CD8-positive, alpha-beta T cell (primary cell): ENCODE measurements at regions of chr1 and their contacts with region 1.

Region 1: GRCh38 chr1:26233903-26234643 is at the start of gene CEP85:
- DNase-seq: peak; percentile 96 to 99 (median 99)
- ATAC-seq: peak; percentile 90
- H3K4me3 ChIP-seq: peak within 1 kb of the TSS; percentile 87 to 95
- H3K4me3 Mint-ChIP-seq: peak within 1 kb of the TSS; percentile 99
- H3K27ac ChIP-seq: peak within 1 kb of the TSS; percentile 81 to 85
- H3K27ac Mint-ChIP-seq: peak within 1 kb of the TSS; percentile 95
- H3K4me1 ChIP-seq: peaks cover 17% of the 10 kb centered on the region
- H3K4me1 Mint-ChIP-seq: peaks cover 36% of the 10 kb centered on the region
- H3K27me3 ChIP-seq: no peaks in the 10 kb centered on the region
- H3K27me3 Mint-ChIP-seq: no peaks in the 10 kb centered on the region
- CTCF ChIP-seq: peak; percentile 72
- total RNA-seq, gene CEP85: 7.1 TPM

Region 2: DNA sequence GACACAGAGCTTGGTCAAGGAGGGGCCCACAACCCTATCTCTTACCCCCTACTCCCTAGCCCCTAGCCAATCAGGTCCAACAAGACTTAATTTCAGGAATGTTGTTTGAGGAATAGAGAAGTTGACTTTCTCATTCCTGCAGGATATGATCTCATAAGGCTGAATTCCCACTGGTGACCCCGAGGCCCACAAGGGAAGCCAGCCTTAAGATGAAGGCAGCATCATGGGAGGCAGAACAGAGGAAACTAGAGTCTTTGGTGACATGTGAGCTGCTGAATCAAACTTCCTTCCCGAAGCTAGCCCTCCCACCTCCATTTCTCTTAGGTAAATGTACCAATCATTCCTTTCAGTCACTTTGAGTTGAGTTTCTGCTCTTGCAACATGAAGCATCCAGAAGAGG is 131.5 kb before region 1 on chr1:
- CTCF ChIA-PET with region 1: interaction called, 4 read pairs
- POLR2A ChIA-PET with region 1: no interaction called
- intact Hi-C with region 1: loop called in 1 of 2 experiments (anchors 2 kb)
- DNase-seq: no peak
- ATAC-seq: no peak
- H3K4me3 ChIP-seq: no peak overlapping the region
- H3K4me3 Mint-ChIP-seq: no peak overlapping the region
- H3K27ac ChIP-seq: no peak overlapping the region
- H3K27ac Mint-ChIP-seq: no peak overlapping the region
- H3K4me1 ChIP-seq: no peaks in the 10 kb centered on the region
- H3K4me1 Mint-ChIP-seq: peaks cover 3% of the 10 kb centered on the region
- H3K27me3 ChIP-seq: peaks cover 0 to 3% of the 10 kb centered on the region in 2 experiments
- H3K27me3 Mint-ChIP-seq: peaks cover 3% of the 10 kb centered on the region
- CTCF ChIP-seq: no peak

Region 3: DNA sequence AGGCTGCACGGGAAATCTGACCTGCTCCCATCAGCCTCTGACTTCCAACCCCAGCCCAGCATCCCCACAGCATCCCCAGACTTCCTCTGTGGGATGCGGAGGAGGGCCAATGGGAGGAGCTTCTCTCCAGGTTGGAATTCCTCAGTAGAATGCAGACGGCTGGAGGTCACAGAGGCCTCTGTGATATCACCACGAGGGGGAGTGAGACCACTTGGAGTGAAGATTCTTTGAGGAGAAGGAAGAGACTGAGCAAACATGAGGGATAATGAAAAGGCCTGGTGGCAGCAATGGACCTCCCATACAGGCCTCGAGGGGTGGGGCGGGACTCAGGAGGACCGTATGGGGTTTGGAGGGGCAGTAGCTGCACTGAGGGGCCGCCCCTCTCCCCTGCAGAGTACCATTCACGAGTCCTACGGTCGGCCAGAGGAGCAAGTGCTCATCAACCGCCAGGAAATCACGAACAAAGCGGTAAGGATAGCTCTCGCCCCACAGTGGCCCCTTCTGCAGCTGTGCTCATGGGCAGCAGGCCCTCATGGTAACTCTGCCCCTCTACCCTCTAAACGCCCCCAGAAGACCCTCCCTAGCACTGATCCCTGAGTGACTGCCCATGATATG is 43.6 kb before region 1 on chr1 and contains the start of gene CATSPER4:
- CTCF ChIA-PET with region 1: interaction called, 9 read pairs
- POLR2A ChIA-PET with region 1: no interaction called
- intact Hi-C with region 1: loop called in 1 of 2 experiments (anchors 1 kb)
- DNase-seq: peak in 1 of 9 experiments; percentile 42
- ATAC-seq: no peak
- H3K4me3 ChIP-seq: no peak within 1 kb of the TSS
- H3K4me3 Mint-ChIP-seq: no peak within 1 kb of the TSS
- H3K27ac ChIP-seq: no peak within 1 kb of the TSS
- H3K27ac Mint-ChIP-seq: no peak within 1 kb of the TSS
- H3K4me1 ChIP-seq: no peaks in the 10 kb centered on the region
- H3K4me1 Mint-ChIP-seq: peaks cover 5% of the 10 kb centered on the region
- H3K27me3 ChIP-seq: no peaks in the 10 kb centered on the region
- H3K27me3 Mint-ChIP-seq: no peaks in the 10 kb centered on the region
- CTCF ChIP-seq: no peak
- total RNA-seq, gene CATSPER4: not detected

Region 4: DNA sequence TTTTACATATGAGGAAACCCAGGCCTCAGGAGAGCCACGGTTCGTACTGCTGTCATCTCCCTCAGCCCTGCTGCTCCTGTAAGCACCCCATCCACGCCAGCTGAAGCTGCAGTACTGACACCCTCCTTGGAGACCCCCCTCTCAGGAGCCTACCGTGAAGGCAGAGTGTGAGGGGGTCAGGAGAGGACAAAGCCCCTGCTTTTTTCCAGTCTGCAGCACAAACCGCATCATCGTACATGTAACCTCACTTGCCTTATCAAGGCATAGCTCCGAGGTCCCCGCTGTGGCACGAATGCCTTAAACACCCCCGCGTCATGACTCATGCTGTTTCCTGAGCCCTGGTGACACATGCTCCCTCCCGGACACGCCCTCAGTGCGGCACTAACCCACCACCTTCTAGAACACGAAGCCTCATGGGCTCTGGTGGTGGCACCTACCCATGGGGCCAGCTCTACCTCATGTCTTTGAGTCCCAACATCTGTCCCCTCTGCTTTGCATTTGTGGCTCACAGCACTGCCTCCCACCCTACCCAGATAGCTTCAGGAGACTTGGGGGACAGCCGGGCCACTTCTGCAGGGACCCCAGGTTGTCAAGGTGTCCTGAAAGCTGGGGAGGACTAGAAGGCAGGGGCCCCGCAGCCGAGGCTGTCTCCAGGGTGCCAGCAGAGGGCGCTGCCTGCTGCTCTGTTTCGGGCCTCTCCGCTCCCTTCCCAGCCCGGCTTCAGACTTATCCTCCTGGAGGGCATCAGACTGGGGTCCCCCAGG is 50.7 kb after region 1 on chr1:
- CTCF ChIA-PET with region 1: interaction called, 8 read pairs
- POLR2A ChIA-PET with region 1: interaction called, 6 read pairs
- intact Hi-C with region 1: loop called in 1 of 2 experiments (anchors 2 kb)
- DNase-seq: peak; percentile 82 to 98 (median 94)
- ATAC-seq: peak; percentile 72
- H3K4me3 ChIP-seq: peak overlapping the region; percentile 27 to 28
- H3K4me3 Mint-ChIP-seq: peak overlapping the region; percentile 82
- H3K27ac ChIP-seq: peak overlapping the region; percentile 61 to 76
- H3K27ac Mint-ChIP-seq: peak overlapping the region; percentile 100
- H3K4me1 ChIP-seq: peaks cover 93% of the 10 kb centered on the region
- H3K4me1 Mint-ChIP-seq: peaks cover 92% of the 10 kb centered on the region
- H3K27me3 ChIP-seq: no peaks in the 10 kb centered on the region
- H3K27me3 Mint-ChIP-seq: no peaks in the 10 kb centered on the region
- CTCF ChIP-seq: peak; percentile 46

Region 5: DNA sequence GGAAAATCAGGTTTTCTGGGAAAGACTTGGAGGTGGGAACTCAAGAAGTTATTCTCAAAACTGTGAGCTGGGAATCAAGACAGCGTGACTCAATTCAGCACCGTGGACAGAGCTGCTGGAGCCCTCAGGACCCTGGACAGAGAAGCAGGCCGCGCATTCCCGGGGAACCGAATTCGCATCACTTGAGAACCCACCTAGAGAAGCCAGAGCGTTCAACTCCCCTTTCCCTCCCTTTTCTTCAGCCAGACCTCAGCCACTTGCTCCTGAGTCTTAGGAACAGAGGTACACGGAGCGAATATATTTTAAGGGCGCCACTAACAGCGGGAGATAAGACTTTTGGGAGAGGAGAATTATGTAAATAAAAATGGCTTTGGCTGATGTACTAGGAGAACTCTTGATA is 174.5 kb after region 1 on chr1:
- CTCF ChIA-PET with region 1: no interaction called
- POLR2A ChIA-PET with region 1: no interaction called
- intact Hi-C with region 1: loop called in 1 of 2 experiments (anchors 1 kb)
- DNase-seq: peak; percentile 65 to 87 (median 81)
- ATAC-seq: peak; percentile 99
- H3K4me3 ChIP-seq: no peak overlapping the region
- H3K4me3 Mint-ChIP-seq: peak overlapping the region; percentile 62
- H3K27ac ChIP-seq: no peak overlapping the region
- H3K27ac Mint-ChIP-seq: no peak overlapping the region
- H3K4me1 ChIP-seq: peaks cover 17% of the 10 kb centered on the region
- H3K4me1 Mint-ChIP-seq: peaks cover 22% of the 10 kb centered on the region
- H3K27me3 ChIP-seq: peaks cover 26 to 42% of the 10 kb centered on the region in 2 experiments
- H3K27me3 Mint-ChIP-seq: peaks cover 54% of the 10 kb centered on the region
- CTCF ChIP-seq: no peak